Endothelial cell of umbilical vein (primary cell): ENCODE measurements at regions of chr20 and their contacts with region 1.

Region 1: DNA sequence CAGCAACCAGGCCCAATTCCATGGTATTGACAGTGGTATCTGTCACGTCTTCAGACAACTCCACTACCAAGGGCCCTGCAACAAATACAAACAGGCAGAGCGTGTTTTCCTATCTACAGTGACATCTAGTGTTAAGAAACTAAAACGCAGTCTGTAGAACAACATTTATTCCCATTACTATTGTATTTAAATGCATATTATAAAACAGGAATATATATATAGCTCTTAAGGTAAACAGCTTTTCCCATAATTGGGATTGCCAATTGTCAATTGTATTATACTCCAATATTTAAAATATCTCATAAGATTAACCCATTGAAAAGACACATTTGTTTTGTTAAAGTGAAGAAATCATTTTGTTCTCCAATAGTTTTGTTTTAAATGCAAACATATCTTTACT is 97.2 kb downstream of the KIF16B start:
- DNase-seq: peak; percentile 65
- H3K4me3 ChIP-seq: no peak overlapping the region
- H3K27ac ChIP-seq: no peak overlapping the region
- H3K4me1 ChIP-seq: no peaks in the 10 kb centered on the region
- H3K27me3 ChIP-seq: no peaks in the 10 kb centered on the region
- CTCF ChIP-seq: peak; percentile 50 to 57
- POLR2A ChIP-seq: no peak

Region 2: DNA sequence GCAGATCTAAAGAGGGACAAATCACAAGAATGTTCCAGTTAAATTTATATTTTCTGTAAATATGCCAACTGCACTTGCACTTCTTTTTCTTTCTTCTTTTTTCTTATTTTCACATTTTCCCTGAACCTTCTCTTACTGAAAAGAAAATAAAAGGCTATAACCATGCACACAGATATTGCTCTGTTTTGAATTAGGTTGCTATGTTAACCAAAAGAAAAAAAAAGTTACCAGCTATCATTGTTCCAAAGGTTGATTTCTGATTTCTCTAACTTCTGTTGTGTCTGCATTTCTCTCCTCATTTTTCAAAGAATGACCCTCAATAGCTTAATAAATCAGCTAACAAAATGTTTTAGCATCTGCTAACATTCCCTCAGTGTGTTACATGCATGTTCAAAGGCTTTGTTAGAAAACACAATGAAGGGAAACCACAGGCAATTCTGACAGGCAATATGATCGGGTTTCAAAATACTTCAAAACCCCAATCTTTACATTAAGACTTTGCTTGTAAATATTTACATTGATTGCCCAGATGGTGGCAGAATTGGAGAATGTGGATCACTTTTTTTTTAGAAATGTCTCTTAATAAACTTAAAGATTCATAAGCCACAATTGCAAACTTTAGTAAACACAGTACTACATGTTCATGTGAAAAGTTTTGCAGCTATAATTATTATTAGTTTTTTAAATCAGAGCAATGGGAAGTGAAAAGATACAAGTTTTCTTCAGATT is 1210.3 kb before region 1 on chr20:
- CTCF ChIA-PET with region 1: no interaction called
- POLR2A ChIA-PET with region 1: no interaction called
- dilution Hi-C with region 1: no loop called
- intact Hi-C with region 1: loop called (anchors 10 kb)
- DNase-seq: no peak
- H3K4me3 ChIP-seq: no peak overlapping the region
- H3K27ac ChIP-seq: no peak overlapping the region
- H3K4me1 ChIP-seq: no peaks in the 10 kb centered on the region
- H3K27me3 ChIP-seq: no peaks in the 10 kb centered on the region
- CTCF ChIP-seq: no peak
- POLR2A ChIP-seq: no peak

Region 3: GRCh38 chr20:15767586-15767985 is 708.4 kb before region 1 on chr20:
- CTCF ChIA-PET with region 1: no interaction called
- POLR2A ChIA-PET with region 1: no interaction called
- dilution Hi-C with region 1: no loop called
- intact Hi-C with region 1: loop called (anchors 5 kb)
- DNase-seq: no peak
- H3K4me3 ChIP-seq: no peak overlapping the region
- H3K27ac ChIP-seq: no peak overlapping the region
- H3K4me1 ChIP-seq: no peaks in the 10 kb centered on the region
- H3K27me3 ChIP-seq: no peaks in the 10 kb centered on the region
- CTCF ChIP-seq: no peak
- POLR2A ChIP-seq: no peak